ENCODE measurements at regions of chr22 and their contacts with region 1.

Region 1: GRCh38 chr22:30289134-30289979 is at the start of gene CASTOR1:
- DNase-seq: peak; percentile 99
- ATAC-seq: peak; percentile 89
- total RNA-seq, gene CASTOR1: 8.2 TPM

Region 2: DNA sequence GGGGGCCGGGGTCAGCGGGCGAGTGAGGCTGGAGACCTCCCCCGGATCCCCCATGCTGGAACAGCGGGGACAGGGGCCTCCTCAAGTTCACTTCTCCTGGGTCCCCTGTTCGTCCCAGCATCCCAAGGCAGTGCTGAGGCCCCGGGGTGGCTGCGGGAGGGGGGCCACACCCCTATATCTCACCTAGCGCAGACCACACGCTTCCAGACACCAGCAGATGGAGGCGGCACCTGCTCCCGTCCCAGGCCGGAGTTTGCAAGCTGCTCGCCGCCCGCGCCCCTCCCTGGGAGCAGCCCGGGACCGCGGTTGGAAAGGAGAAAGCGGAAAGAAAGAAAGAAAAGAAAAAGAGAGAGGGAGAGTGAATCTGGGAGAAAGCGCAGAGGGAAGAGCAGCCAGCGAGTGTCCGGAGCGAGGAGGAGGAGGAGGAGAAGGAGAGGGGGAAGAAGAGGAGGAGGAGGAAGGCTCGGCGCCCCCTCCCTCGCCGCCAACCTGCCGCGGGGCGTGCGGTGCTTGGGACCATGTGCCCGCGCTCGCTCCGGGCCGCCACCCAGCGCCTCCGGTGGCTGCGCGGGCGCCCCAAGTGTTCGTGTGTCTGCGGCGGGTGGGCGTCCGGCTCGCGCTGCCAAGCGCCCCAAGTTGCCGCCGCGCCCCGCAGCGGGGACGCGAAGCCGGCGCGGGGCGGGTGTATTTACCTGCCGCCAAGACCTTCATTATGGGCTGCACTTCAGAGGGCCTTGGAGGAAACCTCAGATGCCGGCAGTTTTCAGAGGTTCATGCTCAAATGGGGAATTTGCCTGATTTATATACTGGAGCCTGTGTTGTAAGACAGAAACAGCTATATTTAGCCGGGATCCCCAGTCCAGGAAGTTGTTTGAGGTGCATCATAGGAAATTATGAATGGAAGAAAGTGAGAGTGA is 43.1 kb before region 1 on chr22 and contains the start of gene LIF:
- intact Hi-C with region 1: no loop called
- DNase-seq: peak; percentile 60
- ATAC-seq: no peak
- total RNA-seq, gene LIF: 0.27 TPM

Region 3: DNA sequence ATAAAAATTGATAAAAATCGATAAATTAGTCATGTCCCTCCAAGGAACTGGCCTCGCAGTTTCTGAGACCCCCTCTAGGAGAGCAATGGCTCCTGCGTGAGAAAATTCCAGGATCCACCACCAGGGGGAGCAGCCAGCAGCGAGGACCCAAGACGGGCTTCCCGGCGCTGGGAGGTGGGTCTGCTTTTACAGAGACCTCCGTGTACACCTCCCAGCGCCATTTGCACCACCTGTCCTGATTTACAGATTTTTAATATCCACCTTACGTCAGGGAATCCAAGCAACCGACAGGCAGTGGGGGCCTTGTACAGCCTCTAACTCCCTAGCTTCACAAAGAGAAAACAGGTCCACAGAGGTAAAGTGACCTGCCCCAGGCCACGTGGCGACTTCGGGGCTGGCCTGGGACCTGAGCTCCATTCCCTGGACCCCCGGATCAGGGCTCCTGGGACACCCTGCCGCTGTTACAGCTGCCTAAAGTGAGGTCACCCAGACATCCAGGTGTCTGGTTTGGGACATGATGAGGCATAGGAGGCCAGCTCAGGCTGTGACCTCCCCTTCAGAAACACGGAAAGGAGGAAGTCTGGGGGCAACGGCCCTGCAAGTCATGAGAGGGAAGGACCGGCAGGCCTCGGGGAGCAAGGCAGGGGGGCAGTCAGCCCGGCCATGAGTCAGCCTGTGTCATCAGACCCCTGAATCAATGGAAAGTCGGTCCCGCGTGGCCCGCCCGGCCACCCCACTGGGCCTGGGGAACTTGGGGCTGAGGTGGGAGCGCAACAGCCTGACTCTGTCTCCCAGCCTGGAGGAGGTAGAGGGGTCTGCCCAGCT is 26.2 kb before region 1 on chr22:
- intact Hi-C with region 1: loop called (anchors 1 kb)
- DNase-seq: peak; percentile 89
- ATAC-seq: no peak

Region 4: DNA sequence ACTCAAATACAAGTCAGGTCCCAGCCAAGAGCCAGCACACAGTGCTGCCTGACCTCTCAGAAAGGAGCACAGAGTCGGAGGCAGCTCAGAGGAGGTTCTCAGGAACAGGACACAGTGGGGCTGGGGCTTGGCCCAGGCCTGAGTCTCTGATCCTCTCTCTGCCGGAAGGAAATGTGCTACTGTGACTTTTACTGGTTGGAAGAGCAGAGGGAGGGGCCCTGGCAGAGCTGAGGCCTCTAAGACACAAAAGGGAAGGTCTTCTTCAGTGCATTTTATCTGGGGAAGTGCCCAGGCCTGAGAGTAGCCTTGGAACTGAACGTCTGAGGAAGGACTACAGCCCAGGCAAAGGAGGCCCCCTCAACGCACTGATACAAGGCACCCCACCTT is 16.2 kb after region 1 on chr22:
- intact Hi-C with region 1: loop called (anchors 2 kb)
- DNase-seq: peak; percentile 83
- ATAC-seq: peak; percentile 83

Region 5: GRCh38 chr22:30326706-30327362 is 37.5 kb after region 1 on chr22 and contains the start of gene TBC1D10A:
- intact Hi-C with region 1: loop called (anchors 1 kb)
- DNase-seq: peak; percentile 96
- ATAC-seq: peak; percentile 95
- total RNA-seq, gene TBC1D10A: 7.1 TPM

Region 6: DNA sequence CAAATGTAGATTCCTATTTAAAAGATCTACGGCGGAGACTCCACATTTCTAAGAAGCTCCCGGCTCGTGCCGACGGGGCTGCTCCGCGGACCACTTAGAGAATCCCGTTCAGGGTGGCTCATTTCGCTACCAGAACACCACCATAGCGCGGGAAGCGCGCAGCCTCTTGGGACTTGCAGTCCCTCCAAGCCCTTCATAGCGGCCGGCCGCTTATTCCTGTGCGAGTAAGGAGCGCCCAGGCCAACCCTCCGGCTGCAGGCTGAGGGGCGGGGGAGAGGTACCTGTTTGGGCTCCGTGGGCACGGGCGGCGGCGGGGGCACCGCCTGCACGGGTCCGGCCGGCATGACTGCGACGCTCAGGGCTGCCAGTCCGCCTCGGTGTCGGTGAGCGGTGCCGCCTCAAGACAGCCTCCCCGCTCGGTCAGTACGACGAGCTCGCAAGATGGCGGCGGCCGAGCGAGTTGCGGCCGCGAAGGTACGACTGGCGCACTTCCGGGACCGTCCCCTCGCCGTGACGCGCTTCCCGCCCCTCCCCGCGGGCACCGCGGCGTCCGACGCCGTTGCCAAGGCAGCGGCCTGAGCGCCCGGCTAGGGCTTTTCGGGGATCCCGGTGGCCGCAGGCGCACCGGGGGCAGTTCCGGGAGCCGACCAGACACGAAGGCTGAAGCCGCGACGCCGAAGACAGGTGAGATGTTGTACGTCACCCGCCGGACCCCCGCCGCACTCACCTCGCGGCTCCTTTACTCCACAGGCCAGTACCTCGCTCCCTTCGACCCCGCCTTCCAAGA is 67.3 kb after region 1 on chr22 and contains the starts of genes CCDC157 and SF3A1:
- intact Hi-C with region 1: loop called (anchors 1 kb)
- DNase-seq: peak; percentile 96
- ATAC-seq: peak; percentile 98
- total RNA-seq, gene CCDC157: 0.46 TPM
- total RNA-seq, gene SF3A1: 95.4 TPM

Measured in Right ventricle myocardium inferior (tissue), 1 donor.